ENCODE measurements at regions of chr11 and their contacts with region 1.

Region 1: DNA sequence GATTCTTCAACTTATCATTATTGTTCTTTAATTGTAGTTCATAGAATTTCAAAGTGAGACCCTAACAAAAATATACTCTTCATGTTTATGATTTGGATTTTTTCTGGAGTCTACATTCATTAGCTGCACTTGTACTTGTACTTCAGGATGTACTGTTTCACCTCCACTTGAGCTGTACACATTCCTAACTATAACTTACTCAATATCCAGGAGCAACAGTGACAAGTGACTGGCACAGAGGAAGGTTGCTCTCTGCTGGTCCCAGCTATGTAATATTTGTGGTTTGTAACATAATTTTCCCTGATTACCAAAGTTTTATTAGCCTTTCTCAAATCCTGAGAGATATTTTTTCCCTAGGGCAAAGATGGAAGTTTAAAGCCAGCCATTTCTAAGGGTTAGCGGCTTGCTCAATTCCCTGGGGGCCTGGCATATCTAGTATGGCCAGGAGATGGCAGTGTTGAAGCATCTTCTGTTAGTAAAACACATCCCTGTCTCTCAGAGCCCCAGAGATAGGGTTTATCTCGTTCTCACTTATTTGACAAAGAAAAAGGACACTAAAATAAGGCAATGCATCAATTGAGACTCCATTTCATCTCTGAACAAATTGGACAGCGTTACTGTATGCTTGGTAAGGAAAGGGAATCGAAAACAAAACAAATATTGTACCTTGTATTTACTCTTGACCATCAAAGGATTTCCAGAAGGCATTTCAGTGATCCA is 14.2 kb downstream of the OR52A5 start:
- DNase-seq: peak; percentile 56
- ATAC-seq: peak; percentile 99
- H3K4me3 ChIP-seq: no peak overlapping the region
- H3K27ac ChIP-seq: no peak overlapping the region
- H3K4me1 ChIP-seq: no peaks in the 10 kb centered on the region
- H3K27me3 ChIP-seq: peaks cover 64% of the 10 kb centered on the region
- CTCF ChIP-seq: peak; percentile 60 to 95 (median 83)
- POLR2A ChIP-seq: no peak
- RAD21 ChIP-seq: peak; percentile 82

Region 2: GRCh38 chr11:5043380-5043779 is 80.6 kb before region 1 on chr11:
- CTCF ChIA-PET with region 1: no interaction called
- POLR2A ChIA-PET with region 1: no interaction called
- RAD21 ChIA-PET with region 1: no interaction called
- intact Hi-C with region 1: no loop called
- DNase-seq: no peak
- ATAC-seq: no peak
- H3K4me3 ChIP-seq: no peak overlapping the region
- H3K27ac ChIP-seq: no peak overlapping the region
- H3K4me1 ChIP-seq: no peaks in the 10 kb centered on the region
- H3K27me3 ChIP-seq: peaks cover 46% of the 10 kb centered on the region
- CTCF ChIP-seq: no peak
- POLR2A ChIP-seq: no peak
- RAD21 ChIP-seq: no peak

Region 3: GRCh38 chr11:5291207-5291838 is 167.4 kb after region 1 on chr11:
- CTCF ChIA-PET with region 1: interaction called, 7 read pairs
- POLR2A ChIA-PET with region 1: no interaction called
- RAD21 ChIA-PET with region 1: no interaction called
- intact Hi-C with region 1: loop called (anchors 5 kb)
- DNase-seq: peak; percentile 35
- ATAC-seq: peak; percentile 91
- H3K4me3 ChIP-seq: no peak overlapping the region
- H3K27ac ChIP-seq: no peak overlapping the region
- H3K4me1 ChIP-seq: peaks cover 0 to 5% of the 10 kb centered on the region in 2 experiments; a peak in 1 of 4 replicates
- H3K27me3 ChIP-seq: no peaks in the 10 kb centered on the region
- CTCF ChIP-seq: peak; percentile 71 to 87 (median 79)
- POLR2A ChIP-seq: no peak
- RAD21 ChIP-seq: peak; percentile 82

Region 4: DNA sequence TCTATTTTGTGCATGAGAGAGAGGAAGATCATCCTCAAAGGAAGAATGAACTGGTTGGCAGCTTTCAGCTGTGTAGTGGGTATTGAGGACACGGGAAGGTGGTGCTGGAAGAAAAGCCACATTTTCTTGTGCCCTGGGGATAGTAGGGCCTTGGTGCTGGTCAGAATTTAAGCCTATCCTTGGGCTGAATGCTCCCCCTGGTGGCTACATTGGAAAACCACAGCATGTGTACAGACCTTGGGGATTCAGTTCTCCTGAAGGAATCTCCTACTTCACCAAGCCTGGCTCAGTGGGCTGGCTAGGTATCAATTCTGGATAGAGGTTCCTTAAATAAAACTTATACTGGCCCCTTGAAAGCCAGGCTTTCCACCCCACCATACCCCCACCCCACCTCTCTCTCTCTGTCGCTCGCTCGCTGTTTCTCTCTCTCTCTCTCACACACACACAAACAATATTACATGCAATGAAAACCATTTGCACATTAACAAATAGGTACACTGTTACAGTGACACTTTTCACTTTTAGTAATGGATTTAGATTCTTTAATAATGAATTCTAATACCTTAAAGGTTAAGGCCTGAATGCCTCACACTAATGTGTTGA is 256.9 kb after region 1 on chr11:
- CTCF ChIA-PET with region 1: interaction called, 3 read pairs
- POLR2A ChIA-PET with region 1: no interaction called
- RAD21 ChIA-PET with region 1: no interaction called
- intact Hi-C with region 1: loop called (anchors 1 kb)
- DNase-seq: peak; percentile 36
- ATAC-seq: peak; percentile 92
- H3K4me3 ChIP-seq: no peak overlapping the region
- H3K27ac ChIP-seq: no peak overlapping the region; the same call in 1 of the 2 replicates
- H3K4me1 ChIP-seq: peaks cover 0 to 16% of the 10 kb centered on the region in 2 experiments; a peak in 1 of 4 replicates
- H3K27me3 ChIP-seq: no peaks in the 10 kb centered on the region
- CTCF ChIP-seq: peak; percentile 45 to 82 (median 78); a peak in 5 of 6 replicates
- POLR2A ChIP-seq: no peak
- RAD21 ChIP-seq: peak; percentile 64

Region 5: GRCh38 chr11:5550440-5551095 is 426.6 kb after region 1 on chr11:
- CTCF ChIA-PET with region 1: interaction called, 3 read pairs
- POLR2A ChIA-PET with region 1: no interaction called
- RAD21 ChIA-PET with region 1: no interaction called
- intact Hi-C with region 1: loop called (anchors 2 kb)
- DNase-seq: peak; percentile 54
- ATAC-seq: peak; percentile 82
- H3K4me3 ChIP-seq: peak overlapping the region in 1 of 2 experiments; percentile 8; a peak in 1 of 4 replicates
- H3K27ac ChIP-seq: no peak overlapping the region
- H3K4me1 ChIP-seq: peaks cover 3 to 13% of the 10 kb centered on the region in 2 experiments
- H3K27me3 ChIP-seq: peaks cover 16% of the 10 kb centered on the region
- CTCF ChIP-seq: no peak
- POLR2A ChIP-seq: no peak
- RAD21 ChIP-seq: no peak

Region 6: DNA sequence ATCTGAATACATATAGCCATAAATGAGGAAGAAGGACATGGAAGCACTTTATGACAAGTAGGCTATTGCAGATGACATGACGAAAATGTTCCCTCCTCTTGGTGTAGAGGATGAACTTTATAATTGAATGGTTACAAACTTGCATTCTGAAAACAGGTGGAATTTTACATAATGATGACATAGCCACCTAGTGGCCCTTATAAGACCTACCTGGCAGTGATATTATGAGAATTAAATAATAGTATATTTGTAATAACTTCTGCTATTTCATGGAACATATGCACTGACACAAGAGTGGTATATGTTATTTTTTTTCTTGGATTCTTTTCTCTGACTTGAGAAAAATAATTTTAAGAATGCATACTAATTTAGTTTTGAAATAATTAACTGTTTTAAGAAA is 588.5 kb after region 1 on chr11:
- CTCF ChIA-PET with region 1: no interaction called
- POLR2A ChIA-PET with region 1: no interaction called
- RAD21 ChIA-PET with region 1: no interaction called
- intact Hi-C with region 1: loop called (anchors 5 kb)
- DNase-seq: peak; percentile 7
- ATAC-seq: peak; percentile 57
- H3K4me3 ChIP-seq: no peak overlapping the region
- H3K27ac ChIP-seq: no peak overlapping the region
- H3K4me1 ChIP-seq: no peaks in the 10 kb centered on the region
- H3K27me3 ChIP-seq: peaks cover 36% of the 10 kb centered on the region
- CTCF ChIP-seq: peak; percentile 41 to 60 (median 56); a peak in 5 of 6 replicates
- POLR2A ChIP-seq: no peak
- RAD21 ChIP-seq: peak; percentile 71